OCI-LY7 (cell line): ENCODE measurements at regions of chr1 and their contacts with region 1.

Region 1: GRCh38 chr1:64864018-64864940 is 102.1 kb downstream of the JAK1 start:
- DNase-seq: peak; percentile 97
- H3K4me3 ChIP-seq: peak overlapping the region; percentile 44
- H3K27ac ChIP-seq: peak overlapping the region; percentile 80
- H3K4me1 ChIP-seq: peaks cover 51% of the 10 kb centered on the region
- CTCF ChIP-seq: 0 out of 2 replicates have a peak, but pooled peaks have one; percentile 10

Region 2: GRCh38 chr1:64851664-64852063 is 12.6 kb before region 1 on chr1:
- CTCF ChIA-PET with region 1: no interaction called
- POLR2A ChIA-PET with region 1: no interaction called
- intact Hi-C with region 1: no loop called
- DNase-seq: no peak
- H3K4me3 ChIP-seq: no peak overlapping the region
- H3K27ac ChIP-seq: no peak overlapping the region
- H3K4me1 ChIP-seq: no peaks in the 10 kb centered on the region
- CTCF ChIP-seq: no peak

Region 3: GRCh38 chr1:64892576-64893573 is 28.6 kb after region 1 on chr1:
- CTCF ChIA-PET with region 1: no interaction called
- POLR2A ChIA-PET with region 1: interaction called, 3 read pairs
- intact Hi-C with region 1: loop called (anchors 2 kb)
- DNase-seq: no peak
- H3K4me3 ChIP-seq: no peak overlapping the region
- H3K27ac ChIP-seq: no peak overlapping the region
- H3K4me1 ChIP-seq: peaks cover 48% of the 10 kb centered on the region
- CTCF ChIP-seq: no peak

Region 4: GRCh38 chr1:64956733-64957441 is 92.6 kb after region 1 on chr1:
- CTCF ChIA-PET with region 1: interaction called, 3 read pairs
- POLR2A ChIA-PET with region 1: interaction called, 21 read pairs
- intact Hi-C with region 1: loop called (anchors 2 kb)
- DNase-seq: peak; percentile 86
- H3K4me3 ChIP-seq: peak overlapping the region; percentile 49
- H3K27ac ChIP-seq: peak overlapping the region; percentile 93
- H3K4me1 ChIP-seq: peaks cover 100% of the 10 kb centered on the region
- CTCF ChIP-seq: no peak

Region 5: GRCh38 chr1:65036545-65037180 is 172.4 kb after region 1 on chr1:
- CTCF ChIA-PET with region 1: no interaction called
- POLR2A ChIA-PET with region 1: interaction called, 4 read pairs
- intact Hi-C with region 1: loop called (anchors 1 kb)
- DNase-seq: no peak
- H3K4me3 ChIP-seq: no peak overlapping the region
- H3K27ac ChIP-seq: no peak overlapping the region
- H3K4me1 ChIP-seq: peaks cover 6% of the 10 kb centered on the region
- CTCF ChIP-seq: no peak